Esophagus muscularis mucosa (tissue), 4 donors: ENCODE measurements at regions of chr2 and their contacts with region 1.

Region 1: GRCh38 chr2:23524261-23524706 is 139.3 kb downstream of the KLHL29 start:
- DNase-seq: no peak
- H3K4me3 ChIP-seq: peak overlapping the region in 1 of 4 donors; percentile 8
- H3K27ac ChIP-seq: peak overlapping the region; percentile 87 to 94 (median 90)
- H3K4me1 ChIP-seq: peaks cover 24 to 75% (median 71%) of the 10 kb centered on the region in 4 donors
- H3K27me3 ChIP-seq: no peaks in the 10 kb centered on the region
- CTCF ChIP-seq: no peak
- EP300 ChIP-seq: peak; percentile 22
- POLR2A ChIP-seq: no peak

Region 2: GRCh38 chr2:23426263-23426905 is 97.9 kb before region 1 on chr2:
- intact Hi-C with region 1: no loop called
- DNase-seq: no peak
- H3K4me3 ChIP-seq: peak overlapping the region in 1 of 4 donors; percentile 12
- H3K27ac ChIP-seq: peak overlapping the region; percentile 69 to 85 (median 82)
- H3K4me1 ChIP-seq: peaks cover 18 to 68% (median 55%) of the 10 kb centered on the region in 4 donors
- H3K27me3 ChIP-seq: no peaks in the 10 kb centered on the region
- CTCF ChIP-seq: no peak
- EP300 ChIP-seq: no peak
- POLR2A ChIP-seq: no peak

Region 3: GRCh38 chr2:23602116-23602515 is 77.8 kb after region 1 on chr2:
- intact Hi-C with region 1: loop called (anchors 5 kb)
- DNase-seq: no peak
- H3K4me3 ChIP-seq: no peak overlapping the region
- H3K27ac ChIP-seq: peak overlapping the region; percentile 90 to 99 (median 96)
- H3K4me1 ChIP-seq: peaks cover 2 to 73% (median 67%) of the 10 kb centered on the region in 4 donors
- H3K27me3 ChIP-seq: no peaks in the 10 kb centered on the region
- CTCF ChIP-seq: no peak
- EP300 ChIP-seq: peak; percentile 99
- POLR2A ChIP-seq: no peak

Region 4: GRCh38 chr2:23617167-23617810 is 93.0 kb after region 1 on chr2:
- intact Hi-C with region 1: loop called (anchors 5 kb)
- DNase-seq: no peak
- H3K4me3 ChIP-seq: peak overlapping the region; percentile 21 to 48 (median 32)
- H3K27ac ChIP-seq: peak overlapping the region; percentile 90 to 96 (median 94)
- H3K4me1 ChIP-seq: peaks cover 38 to 78% (median 69%) of the 10 kb centered on the region in 4 donors
- H3K27me3 ChIP-seq: no peaks in the 10 kb centered on the region
- CTCF ChIP-seq: peak; percentile 69 to 83 (median 77)
- EP300 ChIP-seq: peak; percentile 82
- POLR2A ChIP-seq: no peak